Posterior vena cava (tissue), 2 donors: ENCODE measurements at regions of chr19 and their contacts with region 1.

Region 1: GRCh38 chr19:40813182-40813958 is 14.4 kb downstream of the EGLN2 start:
- DNase-seq: no peak

Region 2: DNA sequence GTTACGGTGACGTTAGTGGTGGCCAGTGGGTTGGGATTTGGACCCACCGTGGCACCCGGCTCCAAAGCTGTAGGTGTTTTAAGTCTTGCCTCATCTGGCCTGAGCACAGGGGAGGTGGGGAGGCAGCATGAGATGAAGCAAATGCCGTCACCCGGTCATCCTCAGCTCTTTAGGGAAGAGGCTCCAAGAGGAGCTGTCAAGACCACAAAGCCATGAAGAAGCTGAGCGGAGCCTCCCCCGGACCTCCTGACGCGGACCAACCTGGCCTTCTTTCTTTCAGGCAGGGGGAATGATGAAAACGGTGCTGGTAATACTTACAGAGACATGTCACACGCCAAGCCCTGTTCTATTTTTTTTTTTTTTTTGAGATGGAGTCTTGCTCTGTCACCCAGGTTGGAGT is 70.5 kb before region 1 on chr19:
- intact Hi-C with region 1: loop called in 1 of 2 experiments (anchors 1 kb)
- DNase-seq: no peak